GM10248 (cell line): ENCODE measurements at regions of chr11 and their contacts with region 1.

Region 1: GRCh38 chr11:83044958-83045712 is 26.6 kb downstream of the RAB30 start:
- DNase-seq: peak; percentile 39
- CTCF ChIP-seq: no peak

Region 2: DNA sequence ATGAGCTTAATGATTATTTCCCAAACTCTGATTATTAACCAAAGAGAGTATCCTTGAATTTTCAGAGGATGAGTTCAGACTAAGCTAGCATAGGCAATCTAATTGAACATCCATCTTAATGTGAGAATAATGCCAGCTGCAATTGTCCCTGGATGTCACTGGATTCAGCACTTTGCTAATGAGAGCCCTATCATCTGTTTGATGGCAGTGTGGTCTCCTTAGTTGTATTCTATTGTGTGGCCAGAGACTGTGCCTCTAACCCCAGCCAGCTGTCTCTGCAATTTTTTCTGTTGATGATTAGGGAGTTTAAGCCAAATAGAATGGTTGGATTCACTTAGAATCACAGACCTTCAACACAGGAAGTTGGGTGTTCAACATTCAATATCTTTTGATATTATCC is 1560.9 kb before region 1 on chr11:
- CTCF ChIA-PET with region 1: no interaction called
- POLR2A ChIA-PET with region 1: no interaction called
- DNase-seq: no peak
- CTCF ChIP-seq: no peak

Region 3: DNA sequence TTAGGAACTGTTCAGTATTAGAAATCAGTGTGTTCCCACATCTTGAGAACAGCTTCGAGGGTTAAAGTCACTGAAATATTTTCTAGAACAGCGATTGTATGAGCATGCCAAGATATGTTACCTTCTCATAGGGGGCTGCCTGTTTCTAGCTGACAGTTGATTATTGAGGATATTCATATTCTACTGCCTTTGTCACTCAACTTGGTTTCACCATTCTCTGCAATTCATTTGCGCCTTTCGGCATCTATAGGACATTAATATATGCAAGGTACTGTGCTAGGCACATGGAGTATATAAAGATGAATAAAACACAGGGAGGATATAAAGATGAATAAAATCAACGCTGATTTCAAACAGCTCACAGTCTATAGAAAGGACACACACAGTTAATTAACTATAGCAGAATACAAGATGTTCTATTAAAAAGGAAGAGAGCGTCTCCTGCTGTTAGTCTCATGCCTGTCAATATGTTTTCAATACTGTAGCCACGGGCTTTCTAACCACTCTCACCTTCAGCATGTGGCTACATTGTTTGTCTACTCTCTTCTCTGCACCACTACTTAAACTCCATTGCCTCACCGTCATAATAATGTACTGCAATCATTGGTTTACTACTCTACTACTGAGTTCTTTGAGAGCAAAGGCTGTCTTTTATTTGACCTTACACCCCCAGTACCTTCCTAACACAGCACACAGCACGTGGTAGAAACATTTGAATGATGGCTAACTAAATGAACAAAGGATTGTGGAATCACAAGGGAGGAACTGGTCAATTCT is 55.3 kb before region 1 on chr11:
- CTCF ChIA-PET with region 1: no interaction called
- POLR2A ChIA-PET with region 1: no interaction called
- DNase-seq: no peak
- CTCF ChIP-seq: no peak

Region 4: GRCh38 chr11:83033972-83034672 is 11.0 kb before region 1 on chr11:
- CTCF ChIA-PET with region 1: interaction called, 38 read pairs
- POLR2A ChIA-PET with region 1: no interaction called
- DNase-seq: no peak
- CTCF ChIP-seq: no peak